BJ (cell line): ENCODE measurements at regions of chr14 and their contacts with region 1.

Region 1: GRCh38 chr14:77059276-77059915 is 30.9 kb upstream of the IRF2BPL start:
- DNase-seq: peak; percentile 67
- H3K4me3 ChIP-seq: no peak overlapping the region
- H3K27me3 ChIP-seq: no peaks in the 10 kb centered on the region
- CTCF ChIP-seq: peak; percentile 46

Region 2: DNA sequence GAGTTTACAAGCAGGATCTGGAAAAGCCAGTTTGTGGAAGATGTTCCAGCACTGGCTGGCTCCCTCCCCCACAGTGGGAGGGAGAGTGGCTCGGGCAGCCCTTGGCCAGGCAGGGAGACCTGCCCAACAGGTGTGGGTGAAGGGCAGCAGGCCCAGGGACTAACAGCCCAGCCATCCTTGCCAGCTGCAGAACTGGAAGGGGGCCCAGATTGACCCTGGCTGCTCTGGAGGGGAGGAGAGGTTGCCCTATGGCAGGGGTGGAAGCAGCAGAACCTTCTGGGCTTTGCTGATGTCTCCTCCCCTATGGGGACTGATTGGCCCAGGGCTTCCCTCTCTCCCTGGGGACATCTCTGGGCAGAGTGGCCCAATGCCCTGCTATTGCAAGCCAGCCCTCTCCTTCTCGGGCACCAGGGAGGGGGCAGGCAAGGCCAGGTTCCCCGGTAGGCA is 51.4 kb before region 1 on chr14:
- CTCF ChIA-PET with region 1: no interaction called
- POLR2A ChIA-PET with region 1: interaction called, 10 read pairs
- DNase-seq: no peak
- H3K4me3 ChIP-seq: no peak overlapping the region
- H3K27me3 ChIP-seq: no peaks in the 10 kb centered on the region
- CTCF ChIP-seq: no peak

Region 3: DNA sequence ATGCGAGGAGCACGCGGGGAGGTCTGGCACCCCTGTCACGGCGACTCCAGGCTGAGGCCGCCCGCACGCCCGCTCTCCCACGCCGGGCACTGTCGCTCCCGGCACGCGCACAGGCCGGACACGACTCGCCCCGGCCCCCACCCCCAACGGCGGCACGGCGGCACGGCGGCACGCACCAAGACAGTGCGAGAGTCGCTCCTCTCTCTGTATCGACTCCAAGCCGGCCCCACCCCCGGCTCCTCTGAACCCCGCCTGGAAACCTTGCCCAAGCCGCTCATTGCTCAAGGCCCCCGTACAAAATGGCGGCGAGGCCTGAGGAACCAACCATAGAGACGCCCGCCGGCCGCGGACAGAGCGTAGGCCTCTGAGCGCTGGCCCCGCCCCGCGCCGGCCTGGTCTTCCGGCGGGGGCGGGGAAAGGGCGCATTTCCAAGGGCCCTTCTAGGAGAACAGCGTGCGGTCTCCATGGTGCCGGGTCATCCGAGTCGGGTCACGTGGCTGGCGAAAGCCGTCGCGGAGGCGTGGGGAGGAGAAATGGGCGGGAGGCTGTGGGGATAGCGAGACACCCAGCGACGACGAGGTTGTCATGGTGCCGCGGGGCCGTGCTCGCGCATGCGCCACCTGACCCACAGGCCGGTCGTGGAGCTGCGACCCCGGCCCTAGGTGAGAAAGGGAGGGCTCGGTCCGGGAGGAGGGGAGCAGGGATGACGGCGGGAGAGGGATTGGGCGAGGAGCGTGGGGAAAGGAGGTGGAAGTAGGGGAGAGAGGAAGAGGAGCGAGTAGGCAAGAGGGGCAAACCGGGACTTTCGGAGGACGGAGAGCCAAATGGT is 38.5 kb after region 1 on chr14 and contains the start of gene CIPC:
- CTCF ChIA-PET with region 1: no interaction called
- POLR2A ChIA-PET with region 1: no interaction called
- DNase-seq: peak; percentile 87
- H3K4me3 ChIP-seq: peak within 1 kb of the TSS; percentile 90
- H3K27me3 ChIP-seq: no peaks in the 10 kb centered on the region
- CTCF ChIP-seq: no peak
- polyA plus RNA-seq, gene CIPC: 14.2 and 15.5 TPM in 2 replicates